Breast epithelium (tissue), 4 donors: ENCODE measurements at regions of chr2 and their contacts with region 1.

Region 1: GRCh38 chr2:236177967-236178899 is 10.0 kb upstream of the GBX2 start:
- DNase-seq: no peak
- H3K4me3 ChIP-seq: peak overlapping the region; percentile 17 to 51 (median 28)
- H3K27ac ChIP-seq: no peak overlapping the region
- H3K4me1 ChIP-seq: peaks cover 0 to 8% of the 10 kb centered on the region in 2 donors
- H3K27me3 ChIP-seq: peaks cover 4 to 72% of the 10 kb centered on the region in 2 donors
- CTCF ChIP-seq: peak in 2 of 3 donors; percentile 58 to 64
- POLR2A ChIP-seq: no peak

Region 2: DNA sequence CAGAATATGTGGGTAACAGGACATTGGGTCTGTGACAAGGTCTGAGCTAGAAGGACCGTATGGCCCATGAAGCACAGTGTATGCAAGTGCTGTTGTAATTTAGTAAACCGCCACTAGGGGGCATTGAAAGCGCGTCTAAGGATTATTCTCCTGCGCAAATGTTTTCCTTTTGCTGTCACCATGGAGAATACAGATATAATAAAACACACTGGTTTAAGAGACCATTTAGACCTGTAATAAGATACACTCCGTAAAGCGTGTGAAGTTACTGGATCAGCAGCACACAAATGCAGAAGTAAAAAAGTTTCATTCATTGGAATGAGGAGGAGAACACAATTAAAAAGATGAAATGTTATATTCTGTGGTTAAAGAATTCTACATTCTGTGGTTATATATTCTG is 412.0 kb before region 1 on chr2:
- intact Hi-C with region 1: loop called (anchors 10 kb)
- DNase-seq: no peak
- H3K4me3 ChIP-seq: no peak overlapping the region
- H3K27ac ChIP-seq: no peak overlapping the region
- H3K4me1 ChIP-seq: no peaks in the 10 kb centered on the region
- H3K27me3 ChIP-seq: no peaks in the 10 kb centered on the region
- CTCF ChIP-seq: peak; percentile 77 to 93 (median 85)
- POLR2A ChIP-seq: no peak

Region 3: DNA sequence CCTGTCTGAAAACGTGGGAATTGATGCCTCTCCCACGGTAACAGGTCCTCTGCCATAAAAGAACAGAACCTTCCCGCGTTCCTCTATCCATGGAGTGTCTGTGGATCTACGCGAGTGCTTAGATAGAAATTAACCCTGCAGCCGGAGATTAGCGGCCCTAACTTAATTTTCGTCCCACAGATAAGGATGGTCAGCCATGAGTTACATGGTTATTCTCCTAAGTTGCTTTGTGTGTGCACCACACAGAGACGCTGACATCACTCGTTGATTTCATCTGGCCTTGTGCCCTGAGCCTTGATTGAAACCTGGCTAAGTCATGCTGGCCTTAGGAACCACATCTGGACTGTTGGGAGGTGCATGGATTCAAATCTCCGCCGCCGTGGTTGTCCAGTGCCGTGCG is 142.2 kb before region 1 on chr2:
- intact Hi-C with region 1: no loop called
- DNase-seq: no peak
- H3K4me3 ChIP-seq: no peak overlapping the region
- H3K27ac ChIP-seq: no peak overlapping the region
- H3K4me1 ChIP-seq: no peaks in the 10 kb centered on the region
- H3K27me3 ChIP-seq: no peaks in the 10 kb centered on the region
- CTCF ChIP-seq: no peak
- POLR2A ChIP-seq: no peak

Region 4: DNA sequence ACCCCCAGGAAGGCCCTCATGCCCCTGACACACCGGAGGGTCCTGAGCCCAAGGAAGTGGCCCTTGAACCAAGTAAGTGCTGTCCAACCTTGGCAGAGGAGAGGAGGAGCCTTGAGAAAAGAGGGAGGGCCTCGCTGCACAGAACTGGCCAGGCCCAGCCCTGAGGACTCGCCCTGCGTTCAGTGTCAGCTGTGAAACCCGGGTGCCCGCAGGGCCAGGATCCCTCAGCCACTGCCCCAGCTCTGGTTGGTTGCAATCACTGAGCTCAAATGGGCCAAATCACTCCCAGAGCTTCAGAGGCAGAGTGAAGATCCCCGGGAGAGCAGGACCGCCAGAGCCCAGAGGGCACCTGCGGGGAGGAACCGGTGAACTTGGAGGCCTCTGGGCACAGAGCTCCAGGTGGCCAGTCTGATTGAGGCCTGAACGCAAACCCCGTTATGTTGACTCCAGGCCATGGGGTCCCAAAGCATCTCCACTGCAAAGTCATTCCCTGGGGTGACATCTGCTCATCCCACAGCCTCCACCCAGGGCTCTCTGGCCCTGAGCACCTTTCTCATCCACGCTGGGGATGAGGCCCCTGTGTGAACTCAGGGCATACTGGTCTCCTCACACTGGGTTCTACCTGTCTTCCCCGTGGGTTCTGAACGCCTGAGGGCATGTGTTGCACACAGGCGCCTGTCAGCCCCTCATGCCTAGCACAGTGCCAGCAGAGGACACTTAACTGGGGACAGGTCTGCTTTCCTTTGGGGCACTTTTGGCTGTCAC is 22.0 kb before region 1 on chr2:
- intact Hi-C with region 1: no loop called
- DNase-seq: no peak
- H3K4me3 ChIP-seq: no peak overlapping the region
- H3K27ac ChIP-seq: no peak overlapping the region
- H3K4me1 ChIP-seq: no peaks in the 10 kb centered on the region
- H3K27me3 ChIP-seq: peaks cover 0 to 20% of the 10 kb centered on the region in 2 donors
- CTCF ChIP-seq: no peak
- POLR2A ChIP-seq: no peak